ENCODE measurements at regions of chr6 and their contacts with region 1.

Region 1: DNA sequence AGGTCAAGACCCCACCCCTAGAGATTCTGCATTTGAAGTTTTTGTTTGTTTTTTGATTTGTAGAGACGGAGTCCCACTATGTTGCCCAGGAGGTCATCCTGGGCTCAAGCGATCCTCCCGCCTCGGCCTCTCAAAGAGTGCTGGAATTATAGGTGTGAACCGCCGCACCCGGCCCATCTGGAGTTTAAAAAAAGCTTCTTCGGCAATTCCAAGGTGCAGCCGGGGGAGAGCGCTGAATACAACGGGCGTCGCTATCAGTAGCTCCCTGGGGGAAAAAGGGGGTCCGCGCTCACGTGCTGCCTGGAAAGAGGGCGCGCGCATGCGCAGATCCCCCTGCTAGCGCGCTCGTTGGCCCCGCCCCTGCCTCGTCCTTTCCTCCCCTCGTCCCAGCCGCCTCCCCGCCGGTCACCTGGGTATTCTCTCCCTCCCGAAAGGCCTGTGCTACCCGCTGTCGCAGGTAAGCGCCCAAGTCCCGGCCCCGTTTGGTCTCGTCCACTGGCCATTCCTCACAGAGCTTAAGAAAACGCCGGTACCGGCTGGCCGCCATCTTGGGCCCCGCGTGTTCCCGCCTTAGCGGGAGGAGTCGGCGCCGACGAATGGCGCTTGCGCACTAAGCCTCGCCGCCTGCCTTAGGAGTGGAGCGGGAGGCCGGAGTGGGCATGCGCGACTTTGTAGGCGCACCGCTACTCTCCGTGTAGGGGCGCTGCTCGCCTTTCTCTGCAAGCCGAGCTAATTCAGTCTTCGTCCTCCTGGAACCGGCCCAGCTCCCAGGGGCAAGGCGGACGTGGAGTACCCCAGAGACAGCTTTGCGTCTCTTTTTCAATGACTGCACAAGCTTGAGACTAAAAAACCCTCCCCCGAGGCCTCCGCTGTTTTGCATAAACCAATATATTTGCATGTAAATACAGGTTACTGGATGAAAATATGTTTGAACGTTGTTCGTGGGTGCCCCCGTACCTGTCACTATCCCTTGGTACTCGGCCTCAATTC is at the start of gene UQCC2:
- DNase-seq: peak; percentile 96 to 97 (median 96)
- H3K4me3 ChIP-seq: peak within 1 kb of the TSS; percentile 58 to 89
- H3K4me3 Mint-ChIP-seq: peak within 1 kb of the TSS; percentile 96 to 99 (median 98)
- H3K27ac ChIP-seq: peak within 1 kb of the TSS; percentile 84
- H3K27ac Mint-ChIP-seq: peak within 1 kb of the TSS; percentile 93 to 99 (median 98)
- H3K4me1 ChIP-seq: peaks cover 22% of the 10 kb centered on the region
- H3K4me1 Mint-ChIP-seq: peaks cover 20 to 32% (median 27%) of the 10 kb centered on the region in 4 donors
- H3K27me3 ChIP-seq: no peaks in the 10 kb centered on the region
- H3K27me3 Mint-ChIP-seq: no peaks in the 10 kb centered on the region
- total RNA-seq, gene UQCC2: 22.8 to 24.8 TPM

Region 2: GRCh38 chr6:33579828-33580714 is 131.4 kb before region 1 on chr6 and contains the start of gene BAK1:
- CTCF ChIA-PET with region 1: interaction called, 19 read pairs
- POLR2A ChIA-PET with region 1: interaction called, 17 read pairs
- intact Hi-C with region 1: no loop called
- DNase-seq: peak; percentile 78 to 89 (median 79)
- H3K4me3 ChIP-seq: peak within 1 kb of the TSS; percentile 88 to 98
- H3K4me3 Mint-ChIP-seq: peak within 1 kb of the TSS; percentile 93 to 100 (median 98)
- H3K27ac ChIP-seq: peak within 1 kb of the TSS; percentile 90
- H3K27ac Mint-ChIP-seq: peak within 1 kb of the TSS; percentile 98 to 100 (median 99)
- H3K4me1 ChIP-seq: peaks cover 31% of the 10 kb centered on the region
- H3K4me1 Mint-ChIP-seq: peaks cover 14 to 58% (median 32%) of the 10 kb centered on the region in 4 donors
- H3K27me3 ChIP-seq: no peaks in the 10 kb centered on the region
- H3K27me3 Mint-ChIP-seq: no peaks in the 10 kb centered on the region
- total RNA-seq, gene BAK1: 26.2 to 27.2 TPM

Region 3: DNA sequence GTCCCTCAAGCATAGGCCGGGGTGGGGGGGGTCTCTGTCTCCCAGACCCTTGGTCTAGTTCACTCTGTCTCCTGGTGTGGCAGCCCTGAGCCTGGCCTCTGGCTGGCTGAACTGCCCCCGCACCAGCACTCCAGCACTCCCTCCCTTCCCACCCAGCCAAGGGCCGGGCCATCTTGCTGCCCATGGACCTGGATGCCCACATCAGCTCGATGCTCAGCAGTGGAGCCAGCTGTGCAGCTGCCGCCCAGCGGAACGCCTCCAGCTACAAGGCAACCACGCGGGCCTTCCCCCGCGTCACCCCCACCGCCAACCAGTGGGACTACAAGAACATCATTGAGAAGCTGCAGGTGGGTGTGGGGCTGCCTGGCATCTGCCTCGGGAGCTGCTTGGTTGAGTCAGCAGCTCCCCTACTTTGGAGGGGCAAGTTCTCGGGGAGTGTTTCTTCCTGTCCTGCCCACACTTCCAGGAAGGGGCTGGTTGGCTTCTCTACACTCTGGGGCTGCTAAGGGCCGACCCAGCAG is 28.3 kb before region 1 on chr6:
- CTCF ChIA-PET with region 1: interaction called, 10 read pairs
- POLR2A ChIA-PET with region 1: interaction called, 3 read pairs
- intact Hi-C with region 1: no loop called
- DNase-seq: peak in 3 of 5 donors; percentile 45 to 70 (median 51)
- H3K4me3 ChIP-seq: no peak overlapping the region
- H3K4me3 Mint-ChIP-seq: peak overlapping the region in 1 of 8 donors; percentile 40
- H3K27ac ChIP-seq: peak overlapping the region; percentile 24
- H3K27ac Mint-ChIP-seq: peak overlapping the region in 6 of 7 donors; percentile 60 to 91 (median 78)
- H3K4me1 ChIP-seq: peaks cover 14% of the 10 kb centered on the region
- H3K4me1 Mint-ChIP-seq: peaks cover 6 to 24% (median 13%) of the 10 kb centered on the region in 4 donors
- H3K27me3 ChIP-seq: no peaks in the 10 kb centered on the region
- H3K27me3 Mint-ChIP-seq: no peaks in the 10 kb centered on the region

Region 4: GRCh38 chr6:33732385-33732784 is 20.9 kb after region 1 on chr6:
- CTCF ChIA-PET with region 1: no interaction called
- POLR2A ChIA-PET with region 1: no interaction called
- intact Hi-C with region 1: no loop called
- DNase-seq: no peak
- H3K4me3 ChIP-seq: no peak overlapping the region
- H3K4me3 Mint-ChIP-seq: no peak overlapping the region
- H3K27ac ChIP-seq: no peak overlapping the region
- H3K27ac Mint-ChIP-seq: no peak overlapping the region
- H3K4me1 ChIP-seq: no peaks in the 10 kb centered on the region
- H3K4me1 Mint-ChIP-seq: peaks cover 0 to 6% (median 0%) of the 10 kb centered on the region in 4 donors
- H3K27me3 ChIP-seq: no peaks in the 10 kb centered on the region
- H3K27me3 Mint-ChIP-seq: peaks cover 0 to 2% of the 10 kb centered on the region in 2 donors

Region 5: GRCh38 chr6:33744001-33744848 is 32.8 kb after region 1 on chr6:
- CTCF ChIA-PET with region 1: interaction called, 21 read pairs
- POLR2A ChIA-PET with region 1: interaction called, 4 read pairs
- intact Hi-C with region 1: loop called (anchors 1 kb)
- DNase-seq: peak; percentile 57 to 68 (median 66)
- H3K4me3 ChIP-seq: no peak overlapping the region
- H3K4me3 Mint-ChIP-seq: no peak overlapping the region
- H3K27ac ChIP-seq: no peak overlapping the region
- H3K27ac Mint-ChIP-seq: no peak overlapping the region
- H3K4me1 ChIP-seq: no peaks in the 10 kb centered on the region
- H3K4me1 Mint-ChIP-seq: peaks cover 0 to 4% (median 3%) of the 10 kb centered on the region in 4 donors
- H3K27me3 ChIP-seq: peaks cover 7% of the 10 kb centered on the region
- H3K27me3 Mint-ChIP-seq: peaks cover 0 to 7% of the 10 kb centered on the region in 2 donors

Region 6: DNA sequence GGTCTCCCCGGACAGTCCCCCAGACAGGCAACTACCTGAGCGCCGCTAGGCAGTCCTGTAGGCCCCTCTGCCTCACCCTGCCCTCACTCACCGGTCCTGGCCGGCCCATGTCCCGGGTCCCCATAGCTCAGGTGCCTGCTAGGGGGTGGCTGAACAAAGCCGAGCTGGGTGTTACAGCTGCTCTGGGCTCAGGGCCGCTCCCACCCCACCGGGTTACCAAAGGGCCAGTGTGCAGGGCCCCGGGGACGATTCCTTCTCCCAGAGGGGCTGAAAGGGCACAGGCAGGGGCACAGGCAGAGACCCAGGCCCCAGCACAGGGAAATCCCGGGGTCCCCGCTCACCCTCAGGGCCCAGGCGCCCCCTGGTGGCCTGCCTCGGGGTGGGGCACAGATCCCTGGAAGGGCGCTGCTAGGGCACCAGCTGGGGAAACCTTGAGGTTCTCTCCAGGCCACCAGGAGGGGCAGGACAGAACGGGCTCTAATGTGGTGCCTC is 316.1 kb after region 1 on chr6:
- CTCF ChIA-PET with region 1: interaction called, 14 read pairs
- POLR2A ChIA-PET with region 1: interaction called, 4 read pairs
- intact Hi-C with region 1: no loop called
- DNase-seq: peak in 4 of 5 donors; percentile 54 to 67 (median 63)
- H3K4me3 ChIP-seq: no peak overlapping the region
- H3K4me3 Mint-ChIP-seq: no peak overlapping the region
- H3K27ac ChIP-seq: no peak overlapping the region
- H3K27ac Mint-ChIP-seq: no peak overlapping the region
- H3K4me1 ChIP-seq: no peaks in the 10 kb centered on the region
- H3K4me1 Mint-ChIP-seq: peaks cover 0 to 4% (median 0%) of the 10 kb centered on the region in 4 donors
- H3K27me3 ChIP-seq: no peaks in the 10 kb centered on the region
- H3K27me3 Mint-ChIP-seq: peaks cover 0 to 5% of the 10 kb centered on the region in 2 donors

Measured in CD4-positive, alpha-beta memory T cell (primary cell).